ENCODE measurements at regions of chr9 and their contacts with region 1.

Region 1: DNA sequence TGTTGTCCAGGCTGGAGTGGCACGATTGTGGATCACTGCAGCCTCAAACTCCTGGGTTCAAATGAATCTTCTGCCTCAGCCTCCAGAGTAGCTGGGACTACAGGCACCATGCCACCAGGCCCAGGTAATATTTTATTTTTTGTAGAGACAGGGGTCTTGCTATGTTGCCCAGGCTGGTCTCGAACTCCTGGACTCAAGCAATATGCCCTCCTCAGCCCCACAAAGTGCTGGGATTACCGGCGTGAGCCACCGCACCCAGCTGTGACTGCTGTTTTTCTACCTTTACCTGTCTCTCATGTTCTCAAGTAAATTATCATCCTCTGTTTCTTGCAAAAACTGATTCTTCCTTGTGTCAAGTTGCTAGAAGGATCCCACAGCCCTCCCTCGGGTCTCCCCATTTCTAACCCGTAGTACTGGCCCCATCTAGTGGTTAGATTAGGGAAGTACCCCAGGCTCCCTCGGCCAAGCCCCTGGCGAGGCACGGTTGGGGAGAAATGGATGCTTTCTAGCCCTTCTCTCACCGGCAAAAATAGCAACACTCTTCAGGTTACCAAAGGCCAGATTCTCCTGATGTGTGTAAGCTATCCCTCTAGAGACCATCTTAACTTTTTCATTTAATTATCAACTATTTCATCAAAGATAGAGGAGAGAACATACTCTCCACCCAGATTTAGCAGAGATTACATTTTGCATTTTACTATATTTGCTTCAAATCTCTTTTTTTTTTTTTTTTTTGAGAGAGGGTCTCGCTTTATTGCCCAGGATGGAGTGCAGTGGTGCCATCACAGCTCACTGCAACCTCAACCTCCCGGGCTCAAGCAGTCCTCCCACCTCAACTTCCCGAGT is 19.2 kb upstream of the TOR1B start:
- DNase-seq: peak; percentile 57
- H3K4me3 ChIP-seq: no peak overlapping the region
- H3K27ac ChIP-seq: no peak overlapping the region
- H3K27me3 ChIP-seq: peaks cover 4% of the 10 kb centered on the region
- CTCF ChIP-seq: peak; percentile 97

Region 2: GRCh38 chr9:129641746-129642513 is 141.8 kb before region 1 on chr9 and contains the start of gene ASB6:
- CTCF ChIA-PET with region 1: interaction called, 26 read pairs
- POLR2A ChIA-PET with region 1: no interaction called
- DNase-seq: peak; percentile 93
- H3K4me3 ChIP-seq: peak within 1 kb of the TSS; percentile 92
- H3K27ac ChIP-seq: peak within 1 kb of the TSS; percentile 92
- H3K27me3 ChIP-seq: no peaks in the 10 kb centered on the region
- CTCF ChIP-seq: peak; percentile 81
- polyA plus RNA-seq, gene ASB6: 11.6 and 15.3 TPM in 2 replicates

Region 3: DNA sequence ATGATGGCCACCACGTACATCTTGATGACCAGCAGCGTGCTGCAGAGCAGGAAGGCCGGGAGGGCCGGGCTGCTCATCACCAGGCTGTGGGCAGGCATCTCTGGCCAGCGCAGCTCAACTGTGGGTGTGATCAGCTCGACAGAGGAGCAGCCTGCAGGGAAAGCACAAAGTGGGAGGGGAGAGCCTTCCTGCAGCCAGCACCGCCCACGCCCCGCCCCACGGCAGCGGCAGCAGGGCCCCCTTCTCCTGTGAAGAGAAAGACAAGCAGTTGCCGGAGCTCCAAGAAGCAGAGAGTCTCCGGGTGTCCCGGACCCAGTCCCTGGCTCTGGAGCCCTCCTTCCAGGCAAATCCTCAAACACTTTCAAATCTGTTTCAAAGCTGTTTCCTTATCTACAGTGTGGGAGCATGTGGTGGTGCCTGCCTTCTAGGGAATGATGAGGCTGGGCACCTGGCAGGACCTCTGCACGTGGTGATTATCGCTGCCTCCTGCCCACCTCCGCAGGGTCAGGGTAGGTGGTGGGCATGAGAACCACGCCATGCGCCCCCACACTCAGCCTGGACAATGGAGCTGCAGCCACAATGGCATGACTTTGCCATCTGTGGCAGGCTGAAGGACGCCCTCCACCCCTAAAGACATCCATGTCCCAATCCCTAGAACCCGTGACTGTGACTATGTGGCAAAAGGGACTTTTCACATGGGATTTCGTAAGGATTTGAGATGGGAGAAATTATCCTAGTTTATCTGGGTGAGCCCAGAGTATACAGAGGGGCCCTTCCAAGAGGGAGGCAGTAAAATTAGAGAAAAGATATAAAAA is 30.6 kb before region 1 on chr9 and contains the start of gene PTGES:
- CTCF ChIA-PET with region 1: interaction called, 15 read pairs
- POLR2A ChIA-PET with region 1: no interaction called
- DNase-seq: peak; percentile 68
- H3K4me3 ChIP-seq: peak within 1 kb of the TSS; percentile 68
- H3K27ac ChIP-seq: peak within 1 kb of the TSS; percentile 21
- H3K27me3 ChIP-seq: peaks cover 2% of the 10 kb centered on the region
- CTCF ChIP-seq: no peak
- polyA plus RNA-seq, gene PTGES: 17.0 and 21.4 TPM in 2 replicates

Region 4: GRCh38 chr9:129761901-129762364 is 21.8 kb before region 1 on chr9:
- CTCF ChIA-PET with region 1: interaction called, 6 read pairs
- POLR2A ChIA-PET with region 1: interaction called, 11 read pairs
- DNase-seq: peak; percentile 55
- H3K4me3 ChIP-seq: peak overlapping the region; percentile 34
- H3K27ac ChIP-seq: peak overlapping the region; percentile 97
- H3K27me3 ChIP-seq: no peaks in the 10 kb centered on the region
- CTCF ChIP-seq: no peak

Region 5: GRCh38 chr9:130390374-130390773 is 606.6 kb after region 1 on chr9:
- CTCF ChIA-PET with region 1: no interaction called
- POLR2A ChIA-PET with region 1: no interaction called
- DNase-seq: no peak
- H3K4me3 ChIP-seq: no peak overlapping the region
- H3K27ac ChIP-seq: no peak overlapping the region
- H3K27me3 ChIP-seq: peaks cover 21% of the 10 kb centered on the region
- CTCF ChIP-seq: no peak